Dendritic cell treated with granulocyte-macrophage colony-stimulating factor and Interleukin-4, amounts not matched to agents 40 ng/mL and 50 ng/mL, for 4 days (primary cell): ENCODE measurements at regions of chrX and their contacts with region 1.

Region 1: DNA sequence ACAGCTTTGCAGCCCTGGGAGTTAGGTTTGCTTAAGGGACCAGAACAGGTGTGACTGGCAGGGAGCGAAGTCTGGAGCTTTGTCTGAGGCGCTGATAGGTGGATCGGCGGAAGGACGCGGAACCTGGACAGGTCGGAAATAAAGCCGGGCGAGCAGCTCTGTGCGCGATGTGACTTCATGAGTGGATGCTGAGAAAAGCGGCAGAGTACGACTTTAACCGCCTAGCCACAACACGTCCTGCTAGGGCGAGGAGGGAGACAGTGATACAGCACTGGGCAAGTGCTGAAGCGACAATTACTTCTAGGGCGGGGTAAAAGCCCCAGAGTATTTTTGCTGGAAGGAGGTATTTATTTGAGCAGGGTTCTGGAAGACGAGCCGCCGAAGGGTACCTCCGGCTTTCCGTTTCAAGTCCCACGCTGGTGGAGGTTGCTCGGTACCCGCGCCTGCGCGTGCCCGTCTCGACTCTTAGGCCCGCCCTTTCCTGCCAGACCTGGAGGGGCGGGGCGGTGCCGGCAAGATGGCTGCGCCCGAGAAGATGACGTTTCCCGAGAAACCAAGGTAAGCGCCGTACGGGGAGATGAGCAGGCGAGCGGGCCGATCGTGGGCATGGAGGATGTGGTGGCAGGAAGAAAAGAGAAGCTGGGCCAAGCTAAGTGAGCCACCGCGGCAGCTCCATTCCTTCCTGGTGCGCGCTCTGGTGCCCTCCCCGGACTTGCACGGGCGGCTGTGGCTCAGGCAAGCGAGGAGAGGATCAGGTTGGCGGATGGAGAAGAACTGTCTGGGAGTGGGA is at the start of gene ZRSR2:
- H3K4me3 Mint-ChIP-seq: no peak within 1 kb of the TSS
- H3K27ac Mint-ChIP-seq: no peak within 1 kb of the TSS
- H3K4me1 Mint-ChIP-seq: peaks cover 26% of the 10 kb centered on the region
- H3K27me3 Mint-ChIP-seq: no peaks in the 10 kb centered on the region

Region 2: DNA sequence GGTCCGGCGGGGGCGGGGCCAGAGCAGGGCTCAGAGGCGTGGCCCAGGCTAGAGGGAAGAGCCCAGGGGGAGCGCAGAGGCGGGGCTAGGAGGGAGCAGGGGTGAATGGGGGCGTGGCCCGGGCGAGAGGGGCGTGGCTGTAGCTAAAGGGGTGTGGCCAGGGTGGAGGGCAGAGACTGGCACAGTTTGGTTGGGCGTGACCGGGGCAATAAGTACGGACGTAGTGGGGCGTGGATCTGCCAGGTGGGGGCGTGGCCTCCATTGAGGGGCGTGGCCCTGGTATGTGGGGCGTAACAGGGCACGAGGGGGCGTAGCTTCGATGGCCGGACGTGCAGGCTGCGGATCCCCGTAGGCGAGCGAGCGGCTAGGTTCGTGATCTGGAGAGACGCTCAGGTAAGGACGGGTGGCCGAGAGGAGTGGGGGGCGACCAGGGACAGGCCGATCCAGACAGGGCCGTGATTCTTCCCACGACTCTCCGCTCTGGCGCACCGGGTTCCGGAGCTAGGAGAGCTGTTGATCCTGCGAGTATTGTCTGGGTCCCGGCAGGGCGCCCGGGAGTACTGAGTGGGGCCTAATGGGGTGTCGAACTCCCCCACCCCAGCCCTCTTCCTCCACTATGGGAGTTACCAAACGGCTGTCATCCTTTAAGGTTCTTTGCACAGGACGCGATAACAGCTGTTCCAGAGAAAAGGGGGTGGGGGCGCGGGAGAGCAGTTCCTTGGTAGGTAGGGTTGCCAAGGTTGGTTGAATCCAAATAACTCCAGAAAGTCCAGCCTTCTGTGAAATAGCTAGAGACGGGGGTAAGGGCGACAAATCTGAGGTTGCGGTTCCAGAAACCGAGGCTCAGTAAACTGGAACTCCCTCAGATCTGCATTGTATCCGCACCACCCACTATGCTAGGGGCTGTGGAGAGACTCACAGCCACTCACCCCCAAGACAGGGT is 51.9 kb before region 1 on chrX and contains the start of gene CA5B:
- intact Hi-C with region 1: loop called (anchors 10 kb)
- H3K4me3 Mint-ChIP-seq: peak within 1 kb of the TSS; percentile 87
- H3K27ac Mint-ChIP-seq: peak within 1 kb of the TSS; percentile 82
- H3K4me1 Mint-ChIP-seq: peaks cover 18% of the 10 kb centered on the region
- H3K27me3 Mint-ChIP-seq: no peaks in the 10 kb centered on the region

Region 3: DNA sequence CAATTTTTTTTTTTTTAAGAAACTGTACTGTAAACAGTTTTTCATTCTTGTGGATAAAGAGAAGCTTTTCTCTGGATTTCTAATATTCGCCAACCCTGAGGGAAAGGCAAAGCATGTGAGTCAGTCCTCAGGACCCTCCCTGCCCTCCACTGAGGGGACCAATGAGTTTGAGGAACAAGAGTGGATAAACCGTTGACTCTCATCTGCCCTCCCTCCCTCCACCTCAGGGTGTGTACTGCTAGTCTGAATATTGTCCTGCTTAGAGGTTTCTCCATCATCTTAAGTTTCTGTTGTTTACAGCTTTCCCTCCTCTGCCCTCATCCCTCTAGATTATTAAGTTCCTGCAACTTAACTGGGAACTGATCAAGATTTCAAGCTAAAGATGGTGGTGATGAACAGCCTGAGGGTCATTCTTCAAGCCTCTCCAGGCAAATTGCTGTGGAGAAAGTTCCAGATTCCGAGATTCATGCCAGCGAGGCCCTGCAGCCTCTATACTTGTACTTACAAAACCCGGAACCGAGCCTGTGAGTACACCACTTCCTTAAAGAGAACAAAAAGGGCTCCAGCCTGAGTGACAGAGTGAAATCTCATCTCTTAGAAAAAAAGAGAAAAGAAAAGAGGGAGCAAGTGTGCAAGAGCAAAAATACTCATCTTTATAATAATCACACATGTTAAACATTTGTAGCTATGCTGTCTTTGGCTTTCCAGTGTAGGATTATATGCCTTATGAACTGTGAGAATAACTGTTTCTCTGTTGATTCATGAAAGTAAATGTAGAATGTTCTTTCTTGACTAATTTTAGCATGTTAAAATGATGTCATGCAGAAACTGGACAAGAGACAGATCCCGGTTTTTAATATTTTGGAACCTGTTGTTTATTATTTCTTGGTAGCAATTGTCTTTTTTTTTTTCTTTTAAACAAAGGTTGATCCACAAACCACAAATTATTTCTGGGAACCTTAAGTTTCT is 40.2 kb before region 1 on chrX:
- intact Hi-C with region 1: loop called (anchors 5 kb)
- H3K4me3 Mint-ChIP-seq: no peak overlapping the region
- H3K27ac Mint-ChIP-seq: peak overlapping the region; percentile 87
- H3K4me1 Mint-ChIP-seq: peaks cover 14% of the 10 kb centered on the region
- H3K27me3 Mint-ChIP-seq: no peaks in the 10 kb centered on the region

Region 4: GRCh38 chrX:15804563-15804962 is 14.4 kb after region 1 on chrX:
- intact Hi-C with region 1: loop called (anchors 2 kb)
- H3K4me3 Mint-ChIP-seq: peak overlapping the region; percentile 66
- H3K27ac Mint-ChIP-seq: peak overlapping the region; percentile 93
- H3K4me1 Mint-ChIP-seq: peaks cover 34% of the 10 kb centered on the region
- H3K27me3 Mint-ChIP-seq: no peaks in the 10 kb centered on the region

Region 5: DNA sequence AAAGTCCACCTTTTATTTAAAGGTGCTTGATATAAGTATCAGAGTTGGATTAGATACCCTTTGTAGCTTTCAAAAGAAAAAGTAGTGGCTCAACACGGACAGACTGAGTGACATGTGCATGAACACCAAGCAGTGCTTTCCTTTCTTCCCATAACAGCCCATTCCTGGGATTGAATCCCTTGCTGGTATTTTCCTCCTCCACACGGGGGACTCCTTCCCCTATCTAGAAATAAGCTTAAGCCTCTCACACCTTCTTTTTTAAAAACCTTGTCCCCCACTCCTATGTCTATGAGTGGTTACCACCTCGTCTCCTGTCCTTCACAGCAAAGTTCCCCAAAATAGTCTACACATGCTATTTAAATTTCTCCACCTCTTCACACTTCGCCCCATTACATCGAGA is 59.4 kb after region 1 on chrX:
- intact Hi-C with region 1: loop called (anchors 10 kb)
- H3K4me3 Mint-ChIP-seq: no peak overlapping the region
- H3K27ac Mint-ChIP-seq: peak overlapping the region; percentile 16
- H3K4me1 Mint-ChIP-seq: peaks cover 25% of the 10 kb centered on the region
- H3K27me3 Mint-ChIP-seq: no peaks in the 10 kb centered on the region